CD8-positive, alpha-beta T cell (primary cell): ENCODE measurements at regions of chr9 and their contacts with region 1.

Region 1: GRCh38 chr9:136790927-136791641 is at the start of gene TMEM141:
- DNase-seq: peak; percentile 99 to 100 (median 100)
- ATAC-seq: peak; percentile 85
- H3K4me3 ChIP-seq: peak within 1 kb of the TSS; percentile 73 to 74
- H3K4me3 Mint-ChIP-seq: peak within 1 kb of the TSS; percentile 85
- H3K27ac ChIP-seq: peak within 1 kb of the TSS; percentile 88 to 94
- H3K27ac Mint-ChIP-seq: peak within 1 kb of the TSS; percentile 97
- H3K4me1 ChIP-seq: peaks cover 32% of the 10 kb centered on the region
- H3K4me1 Mint-ChIP-seq: peaks cover 29% of the 10 kb centered on the region
- H3K27me3 ChIP-seq: no peaks in the 10 kb centered on the region
- H3K27me3 Mint-ChIP-seq: no peaks in the 10 kb centered on the region
- CTCF ChIP-seq: no peak
- total RNA-seq, gene TMEM141: 14.5 to 16.6 TPM

Region 2: DNA sequence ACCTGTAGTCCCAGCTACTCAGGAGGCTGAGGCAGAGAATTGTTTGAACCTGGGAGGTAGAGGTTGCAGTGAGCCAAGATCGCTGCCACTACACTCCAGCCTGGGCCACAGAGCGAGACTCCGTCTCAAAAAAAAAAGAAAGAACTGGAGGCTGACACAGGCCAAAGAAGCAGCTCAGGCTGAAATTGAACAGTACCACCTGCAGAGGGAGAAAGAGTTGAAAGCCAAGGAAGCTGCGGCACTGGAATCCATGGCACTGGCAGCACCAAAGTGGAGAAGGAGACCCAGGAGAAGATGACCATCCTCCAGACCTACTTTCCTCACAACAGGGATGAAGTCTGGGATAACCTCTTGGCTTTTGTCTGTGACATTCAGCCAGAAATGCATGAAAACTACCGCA is 11.3 kb before region 1 on chr9:
- CTCF ChIA-PET with region 1: interaction called, 16 read pairs
- POLR2A ChIA-PET with region 1: no interaction called
- intact Hi-C with region 1: no loop called
- DNase-seq: no peak
- ATAC-seq: no peak
- H3K4me3 ChIP-seq: no peak overlapping the region
- H3K4me3 Mint-ChIP-seq: no peak overlapping the region
- H3K27ac ChIP-seq: no peak overlapping the region
- H3K27ac Mint-ChIP-seq: no peak overlapping the region
- H3K4me1 ChIP-seq: no peaks in the 10 kb centered on the region
- H3K4me1 Mint-ChIP-seq: no peaks in the 10 kb centered on the region
- H3K27me3 ChIP-seq: no peaks in the 10 kb centered on the region
- H3K27me3 Mint-ChIP-seq: peaks cover 13% of the 10 kb centered on the region
- CTCF ChIP-seq: no peak

Region 3: GRCh38 chr9:136928591-136928990 is 137.5 kb after region 1 on chr9:
- CTCF ChIA-PET with region 1: no interaction called
- POLR2A ChIA-PET with region 1: no interaction called
- intact Hi-C with region 1: loop called in 1 of 2 experiments (anchors 5 kb)
- DNase-seq: peak in 1 of 9 experiments; percentile 8
- ATAC-seq: no peak
- H3K4me3 ChIP-seq: no peak overlapping the region
- H3K4me3 Mint-ChIP-seq: no peak overlapping the region
- H3K27ac ChIP-seq: no peak overlapping the region
- H3K27ac Mint-ChIP-seq: no peak overlapping the region
- H3K4me1 ChIP-seq: no peaks in the 10 kb centered on the region
- H3K4me1 Mint-ChIP-seq: no peaks in the 10 kb centered on the region
- H3K27me3 ChIP-seq: no peaks in the 10 kb centered on the region
- H3K27me3 Mint-ChIP-seq: no peaks in the 10 kb centered on the region
- CTCF ChIP-seq: no peak

Region 4: GRCh38 chr9:137034863-137035761 is 244.0 kb after region 1 on chr9:
- CTCF ChIA-PET with region 1: interaction called, 67 read pairs
- POLR2A ChIA-PET with region 1: interaction called, 6 read pairs
- intact Hi-C with region 1: loop called (anchors 1 kb)
- DNase-seq: peak; percentile 74 to 94 (median 90)
- ATAC-seq: peak; percentile 89
- H3K4me3 ChIP-seq: peak overlapping the region; percentile 31 to 48
- H3K4me3 Mint-ChIP-seq: peak overlapping the region; percentile 70
- H3K27ac ChIP-seq: peak overlapping the region in 1 of 2 experiments; percentile 66
- H3K27ac Mint-ChIP-seq: peak overlapping the region; percentile 83
- H3K4me1 ChIP-seq: peaks cover 46% of the 10 kb centered on the region
- H3K4me1 Mint-ChIP-seq: peaks cover 34% of the 10 kb centered on the region
- H3K27me3 ChIP-seq: no peaks in the 10 kb centered on the region
- H3K27me3 Mint-ChIP-seq: no peaks in the 10 kb centered on the region
- CTCF ChIP-seq: peak; percentile 90

Region 5: GRCh38 chr9:137223078-137223970 is 432.2 kb after region 1 on chr9:
- CTCF ChIA-PET with region 1: no interaction called
- POLR2A ChIA-PET with region 1: no interaction called
- intact Hi-C with region 1: loop called (anchors 1 kb)
- DNase-seq: peak; percentile 95 to 99 (median 97)
- ATAC-seq: peak; percentile 93
- H3K4me3 ChIP-seq: peak overlapping the region; percentile 75 to 88
- H3K4me3 Mint-ChIP-seq: peak overlapping the region; percentile 83
- H3K27ac ChIP-seq: peak overlapping the region; percentile 69 to 86
- H3K27ac Mint-ChIP-seq: peak overlapping the region; percentile 81
- H3K4me1 ChIP-seq: peaks cover 19% of the 10 kb centered on the region
- H3K4me1 Mint-ChIP-seq: peaks cover 8% of the 10 kb centered on the region
- H3K27me3 ChIP-seq: peaks cover 0 to 5% of the 10 kb centered on the region in 2 experiments
- H3K27me3 Mint-ChIP-seq: peaks cover 3% of the 10 kb centered on the region
- CTCF ChIP-seq: no peak

Region 6: GRCh38 chr9:137551651-137552384 is 760.7 kb after region 1 on chr9 and contains the start of gene MRPL41:
- CTCF ChIA-PET with region 1: no interaction called
- POLR2A ChIA-PET with region 1: no interaction called
- intact Hi-C with region 1: loop called in 1 of 2 experiments (anchors 5 kb)
- DNase-seq: peak; percentile 79 to 95 (median 86)
- ATAC-seq: peak; percentile 84
- H3K4me3 ChIP-seq: peak within 1 kb of the TSS; percentile 59 to 76
- H3K4me3 Mint-ChIP-seq: peak within 1 kb of the TSS; percentile 79
- H3K27ac ChIP-seq: peak within 1 kb of the TSS; percentile 64 to 70
- H3K27ac Mint-ChIP-seq: peak within 1 kb of the TSS; percentile 79
- H3K4me1 ChIP-seq: peaks cover 15% of the 10 kb centered on the region
- H3K4me1 Mint-ChIP-seq: peaks cover 15% of the 10 kb centered on the region
- H3K27me3 ChIP-seq: no peaks in the 10 kb centered on the region
- H3K27me3 Mint-ChIP-seq: no peaks in the 10 kb centered on the region
- CTCF ChIP-seq: no peak
- total RNA-seq, gene MRPL41: 31.8 to 33.5 TPM